Activated T-helper 2 cell treated with anti-CD3 and anti-CD28 coated beads, Interferon-gamma antibody, Interleukin-2, Interleukin-4, amounts not matched to agents 10 μg/mL and 5 μg/mL and 100 μg/mL, durations not matched to agents 14 hours and 24 hours and 36 hours (primary cell): ENCODE measurements at regions of chr5 and their contacts with region 1.

Region 1: DNA sequence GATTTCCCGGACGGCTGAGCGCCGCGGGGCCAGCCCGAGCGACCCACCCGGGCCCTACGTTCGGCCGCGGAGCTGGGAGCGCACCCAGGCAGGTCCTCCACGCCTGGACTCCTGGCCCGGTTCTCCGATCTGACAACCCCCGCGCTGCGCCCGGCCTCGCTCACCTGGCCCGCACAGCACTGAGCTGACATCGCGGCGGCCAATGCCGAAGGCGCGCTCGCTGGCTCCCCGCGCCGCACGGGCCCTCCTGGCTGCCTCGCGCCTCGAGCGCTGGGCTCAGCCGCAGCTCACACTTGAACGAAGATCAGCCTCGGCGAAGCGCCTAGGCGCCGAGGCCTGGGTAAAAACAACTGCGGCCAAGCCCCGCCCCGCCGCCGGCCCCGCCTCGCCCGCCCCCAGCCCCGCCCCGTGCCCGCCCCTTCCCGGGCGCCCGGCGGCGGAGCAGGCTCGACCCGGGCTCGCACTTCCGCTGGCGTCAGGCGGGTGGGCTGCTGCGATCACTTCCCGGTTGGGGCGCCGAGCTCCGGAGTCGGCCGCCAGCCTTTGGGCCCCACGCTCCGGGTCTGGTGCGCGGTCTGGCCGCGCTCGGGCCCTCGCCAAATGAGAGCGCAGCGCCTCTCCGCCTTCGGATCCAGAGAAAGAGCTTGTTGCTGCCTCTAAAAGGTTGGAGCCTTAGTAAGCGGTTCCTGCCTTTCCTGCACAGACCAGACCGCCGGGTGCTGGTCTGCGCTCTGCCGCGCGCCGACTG is at the start of gene SERINC5:
- DNase-seq: peak; percentile 83
- H3K4me3 Mint-ChIP-seq: peak within 1 kb of the TSS; percentile 95
- H3K27ac Mint-ChIP-seq: peak within 1 kb of the TSS; percentile 99
- H3K4me1 Mint-ChIP-seq: peaks cover 42% of the 10 kb centered on the region
- H3K27me3 Mint-ChIP-seq: no peaks in the 10 kb centered on the region
- total RNA-seq, gene SERINC5: 18.9 and 19.0 TPM in 2 replicates

Region 2: GRCh38 chr5:80213466-80213865 is 42.4 kb before region 1 on chr5:
- intact Hi-C with region 1: loop called (anchors 5 kb)
- DNase-seq: no peak
- H3K4me3 Mint-ChIP-seq: no peak overlapping the region
- H3K27ac Mint-ChIP-seq: no peak overlapping the region
- H3K4me1 Mint-ChIP-seq: peaks cover 72% of the 10 kb centered on the region
- H3K27me3 Mint-ChIP-seq: no peaks in the 10 kb centered on the region

Region 3: DNA sequence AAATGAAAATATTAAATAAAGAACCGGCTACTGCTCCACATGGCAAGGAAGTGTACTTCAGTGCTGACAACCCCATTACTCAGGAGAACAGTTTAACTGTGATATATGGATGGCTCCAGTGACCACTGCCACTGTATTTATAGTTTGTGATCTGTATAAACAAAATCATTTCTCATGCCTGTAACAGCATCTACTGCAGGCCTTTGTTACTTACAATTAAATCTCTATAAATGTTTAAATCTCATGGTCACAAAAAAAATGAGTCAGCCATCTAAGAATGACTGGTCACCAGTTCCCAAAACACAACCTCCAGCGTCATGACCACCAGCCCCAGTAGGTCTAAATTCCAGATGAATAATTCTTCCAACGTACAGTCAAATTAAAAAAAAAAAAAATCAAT is 24.7 kb before region 1 on chr5:
- intact Hi-C with region 1: loop called (anchors 1 kb)
- DNase-seq: no peak
- H3K4me3 Mint-ChIP-seq: no peak overlapping the region
- H3K27ac Mint-ChIP-seq: peak overlapping the region; percentile 29
- H3K4me1 Mint-ChIP-seq: peaks cover 34% of the 10 kb centered on the region
- H3K27me3 Mint-ChIP-seq: no peaks in the 10 kb centered on the region

Region 4: GRCh38 chr5:80268916-80269315 is 13.0 kb after region 1 on chr5:
- intact Hi-C with region 1: loop called (anchors 1 kb)
- DNase-seq: no peak
- H3K4me3 Mint-ChIP-seq: peak overlapping the region; percentile 26
- H3K27ac Mint-ChIP-seq: peak overlapping the region; percentile 89
- H3K4me1 Mint-ChIP-seq: peaks cover 27% of the 10 kb centered on the region
- H3K27me3 Mint-ChIP-seq: no peaks in the 10 kb centered on the region